H1 (cell line): ENCODE measurements at regions of chr17 and their contacts with region 1.

Region 1: GRCh38 chr17:75877752-75878173 is 618 bp downstream of the TRIM47 start:
- DNase-seq: peak in 1 of 2 experiments; percentile 87
- H3K4me3 ChIP-seq: peak overlapping the region; percentile 40 to 72 (median 66)
- H3K27ac ChIP-seq: no peak overlapping the region
- H3K4me1 ChIP-seq: peaks cover 0 to 22% (median 12%) of the 10 kb centered on the region in 4 experiments; a peak in 6 of 7 replicates
- H3K27me3 ChIP-seq: peaks cover 10 to 31% (median 24%) of the 10 kb centered on the region in 4 experiments
- CTCF ChIP-seq: peak; percentile 53 to 69 (median 57)
- EP300 ChIP-seq: no peak
- POLR2A ChIP-seq: no peak
- RAD21 ChIP-seq: peak; percentile 10 to 44; a peak in 1 of 4 replicates

Region 2: GRCh38 chr17:75667021-75667790 is 210.6 kb before region 1 on chr17 and contains the starts of genes RECQL5 and SAP30BP:
- CTCF ChIA-PET with region 1: no interaction called
- POLR2A ChIA-PET with region 1: no interaction called
- DNase-seq: peak; percentile 94 to 97
- H3K4me3 ChIP-seq: peak within 1 kb of the TSS; percentile 81 to 99 (median 96)
- H3K27ac ChIP-seq: peak within 1 kb of the TSS; percentile 88
- H3K4me1 ChIP-seq: peaks cover 0 to 13% (median 3%) of the 10 kb centered on the region in 4 experiments; a peak in 2 of 7 replicates
- H3K27me3 ChIP-seq: no peaks in the 10 kb centered on the region
- CTCF ChIP-seq: no peak
- EP300 ChIP-seq: no peak
- POLR2A ChIP-seq: peak; percentile 79 to 88
- RAD21 ChIP-seq: no peak
- total RNA-seq, gene RECQL5: 40.7 and 41.1 TPM in 2 replicates
- total RNA-seq, gene SAP30BP: 79.9 and 81.5 TPM in 2 replicates

Region 3: GRCh38 chr17:75864448-75864871 is 13.3 kb before region 1 on chr17:
- CTCF ChIA-PET with region 1: interaction called, 157 read pairs
- POLR2A ChIA-PET with region 1: interaction called, 9 read pairs
- DNase-seq: no peak
- H3K4me3 ChIP-seq: no peak overlapping the region
- H3K27ac ChIP-seq: no peak overlapping the region
- H3K4me1 ChIP-seq: peaks cover 0 to 3% (median 1%) of the 10 kb centered on the region in 4 experiments; a peak in 5 of 7 replicates
- H3K27me3 ChIP-seq: no peaks in the 10 kb centered on the region
- CTCF ChIP-seq: no peak
- EP300 ChIP-seq: no peak
- POLR2A ChIP-seq: no peak
- RAD21 ChIP-seq: no peak